Naive thymus-derived CD4-positive, alpha-beta T cell (primary cell): ENCODE measurements at regions of chr1 and their contacts with region 1.

Region 1: GRCh38 chr1:108828022-108828961 is 28.6 kb downstream of the AKNAD1 start:
- DNase-seq: peak; percentile 37 to 62 (median 46)
- ATAC-seq: peak; percentile 61
- H3K4me3 ChIP-seq: no peak overlapping the region
- H3K4me3 Mint-ChIP-seq: no peak overlapping the region
- H3K27ac ChIP-seq: no peak overlapping the region
- H3K27ac Mint-ChIP-seq: no peak overlapping the region
- H3K4me1 ChIP-seq: no peaks in the 10 kb centered on the region
- H3K4me1 Mint-ChIP-seq: peaks cover 0 to 9% (median 0%) of the 10 kb centered on the region in 7 donors
- H3K27me3 ChIP-seq: peaks cover 0 to 3% of the 10 kb centered on the region in 2 donors
- H3K27me3 Mint-ChIP-seq: peaks cover 0 to 12% (median 0%) of the 10 kb centered on the region in 5 donors

Region 2: DNA sequence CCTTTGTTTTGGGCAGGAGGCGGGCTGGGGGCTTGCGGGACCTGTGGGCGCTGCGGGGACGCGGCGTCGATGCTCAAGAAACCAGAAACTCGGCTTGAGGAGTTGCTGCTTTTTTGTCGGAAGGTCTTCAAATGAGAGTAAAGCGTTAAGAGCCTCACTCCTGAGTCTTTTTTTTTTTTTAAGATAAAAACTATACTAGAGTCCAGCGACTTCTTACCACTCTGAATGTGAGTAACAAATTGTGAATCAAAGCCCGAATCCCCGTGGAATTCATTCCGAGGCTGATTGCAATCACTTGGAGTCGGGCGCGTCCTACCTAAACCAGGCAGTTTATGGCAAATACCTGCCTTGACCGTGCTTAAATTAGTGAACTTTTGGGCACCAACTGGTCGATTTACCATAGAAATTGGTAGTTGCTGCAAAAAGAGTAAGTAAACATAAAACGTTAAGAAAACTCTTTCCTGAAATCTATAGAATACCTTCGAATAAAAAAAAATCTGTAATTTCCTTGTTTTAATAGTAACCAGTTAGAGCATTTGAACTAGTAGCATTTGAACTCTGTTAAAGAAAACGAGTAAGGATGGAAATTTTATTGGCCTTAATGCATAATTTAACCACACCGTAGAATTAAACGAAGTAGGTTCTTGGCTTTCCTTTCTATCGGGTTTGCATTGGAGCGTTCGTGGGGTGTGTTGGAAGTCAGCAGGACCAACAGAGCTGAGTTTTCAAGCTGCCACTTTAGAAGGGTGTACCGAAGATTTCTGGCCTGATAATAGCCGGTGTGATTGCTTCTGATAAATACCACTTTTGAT is 49.3 kb after region 1 on chr1:
- CTCF ChIA-PET with region 1: interaction called, 3 read pairs
- POLR2A ChIA-PET with region 1: no interaction called
- intact Hi-C with region 1: loop called (anchors 1 to 2 kb)
- DNase-seq: peak in 1 of 9 donors; percentile 0
- ATAC-seq: no peak
- H3K4me3 ChIP-seq: peak overlapping the region; percentile 68
- H3K4me3 Mint-ChIP-seq: peak overlapping the region; percentile 88 to 96 (median 92)
- H3K27ac ChIP-seq: peak overlapping the region; percentile 29
- H3K27ac Mint-ChIP-seq: peak overlapping the region in 7 of 9 donors; percentile 2 to 87 (median 58)
- H3K4me1 ChIP-seq: peaks cover 0 to 4% of the 10 kb centered on the region in 2 donors
- H3K4me1 Mint-ChIP-seq: peaks cover 0 to 27% (median 12%) of the 10 kb centered on the region in 7 donors
- H3K27me3 ChIP-seq: no peaks in the 10 kb centered on the region
- H3K27me3 Mint-ChIP-seq: peaks cover 3 to 17% (median 6%) of the 10 kb centered on the region in 5 donors